Heart right ventricle (tissue), 16 donors: ENCODE measurements at regions of chr6 and their contacts with region 1.

Region 1: DNA sequence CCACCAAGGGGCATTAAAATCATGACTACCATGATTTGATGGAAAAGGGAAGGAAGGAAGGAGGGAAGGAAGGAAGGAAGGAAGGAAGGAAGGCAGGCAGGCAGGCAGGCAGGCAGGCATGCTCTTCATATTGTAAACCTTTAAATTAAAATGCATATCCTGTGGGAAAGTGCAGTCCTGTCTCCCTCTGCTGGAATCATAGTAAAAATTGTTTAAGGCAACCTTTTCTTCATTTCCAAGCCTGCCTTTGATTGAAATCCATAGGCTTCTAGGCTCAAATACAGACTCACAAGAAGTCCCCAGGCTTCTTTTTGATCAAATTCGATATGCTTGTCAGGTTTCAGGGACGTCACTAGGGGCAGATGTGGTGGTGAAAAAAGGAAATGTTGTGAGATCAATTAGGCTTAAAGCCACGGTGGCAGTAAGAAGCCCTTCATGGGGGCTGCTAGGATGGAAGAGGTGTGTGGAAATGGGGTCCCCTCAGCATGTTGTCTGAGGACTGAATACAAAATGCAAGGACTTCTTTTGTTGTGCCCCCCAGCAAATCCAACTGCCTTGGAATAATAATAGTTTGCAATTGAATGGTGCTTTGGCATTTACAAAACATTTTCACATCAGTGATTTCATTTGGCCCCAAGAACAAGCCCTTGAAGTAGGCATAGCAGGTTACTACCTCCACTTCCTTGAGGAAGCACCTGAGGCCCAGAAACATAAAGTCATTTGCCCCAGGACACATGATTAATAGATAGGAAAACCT is 25.6 kb upstream of the GABRR1 start:
- DNase-seq: peak in 1 of 2 donors; percentile 11
- ATAC-seq: peak in 1 of 8 donors; percentile 35
- H3K4me3 ChIP-seq: no peak overlapping the region
- H3K27ac ChIP-seq: no peak overlapping the region
- H3K4me1 ChIP-seq: peaks cover 0 to 8% (median 0%) of the 10 kb centered on the region in 9 donors
- H3K27me3 ChIP-seq: peaks cover 0 to 3% (median 0%) of the 10 kb centered on the region in 7 donors
- CTCF ChIP-seq: peak; percentile 30 to 67 (median 51)

Region 2: DNA sequence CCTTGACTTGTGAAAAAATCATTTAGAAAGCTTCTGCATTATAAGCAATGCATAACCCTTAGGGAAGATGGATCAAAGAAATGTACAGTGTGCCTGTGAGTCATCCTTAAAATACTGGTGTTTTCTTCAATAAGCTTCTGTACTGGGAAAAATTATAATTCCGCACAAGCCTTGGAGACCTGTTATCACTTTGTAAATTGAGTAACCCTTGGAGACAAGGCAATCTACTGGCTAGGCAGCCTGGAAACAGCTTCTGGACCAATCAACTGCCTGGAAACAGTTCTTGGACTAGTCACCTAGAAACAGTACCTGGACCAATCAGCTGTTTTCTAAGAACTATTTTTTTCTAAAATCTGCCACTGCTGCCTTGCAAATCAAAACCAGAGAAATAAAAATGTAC is 253.5 kb before region 1 on chr6:
- intact Hi-C with region 1: loop called in 3 of 10 experiments (anchors 5 kb)
- DNase-seq: no peak
- ATAC-seq: no peak
- H3K4me3 ChIP-seq: no peak overlapping the region
- H3K27ac ChIP-seq: no peak overlapping the region
- H3K4me1 ChIP-seq: peaks cover 0 to 10% (median 0%) of the 10 kb centered on the region in 9 donors
- H3K27me3 ChIP-seq: no peaks in the 10 kb centered on the region
- CTCF ChIP-seq: no peak

Region 3: DNA sequence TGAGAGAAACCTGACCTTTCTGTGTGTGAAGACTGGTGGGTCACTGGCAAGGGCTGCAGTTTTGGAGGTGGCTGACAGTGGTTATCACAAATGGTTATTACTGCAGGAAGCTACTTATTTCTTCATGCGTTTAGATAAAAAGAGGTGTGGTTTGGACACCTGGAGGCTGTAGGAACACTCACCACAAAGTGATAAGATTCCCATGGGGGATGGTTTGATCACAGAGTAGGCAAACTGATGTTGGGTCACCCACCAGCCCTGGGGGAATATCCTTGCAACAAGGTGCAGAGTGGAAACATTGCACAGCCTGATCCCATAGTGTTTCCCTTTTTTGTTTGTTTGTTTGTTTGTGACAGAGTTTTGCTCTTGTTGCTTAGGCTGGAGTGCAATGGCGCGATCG is 245.4 kb before region 1 on chr6:
- intact Hi-C with region 1: loop called in 1 of 10 experiments (anchors 5 kb)
- DNase-seq: no peak
- ATAC-seq: no peak
- H3K4me3 ChIP-seq: no peak overlapping the region
- H3K27ac ChIP-seq: no peak overlapping the region
- H3K4me1 ChIP-seq: peaks cover 0 to 14% (median 0%) of the 10 kb centered on the region in 9 donors
- H3K27me3 ChIP-seq: no peaks in the 10 kb centered on the region
- CTCF ChIP-seq: no peak

Region 4: GRCh38 chr6:89117211-89118108 is 125.3 kb before region 1 on chr6 and contains the start of gene SRSF12:
- intact Hi-C with region 1: loop called (anchors 1 to 10 kb)
- DNase-seq: peak; percentile 13 to 36
- ATAC-seq: peak; percentile 80 to 90 (median 86)
- H3K4me3 ChIP-seq: peak within 1 kb of the TSS; percentile 53 to 96 (median 73)
- H3K27ac ChIP-seq: peak within 1 kb of the TSS in 3 of 10 donors; percentile 1 to 70 (median 46)
- H3K4me1 ChIP-seq: peaks cover 0 to 14% (median 7%) of the 10 kb centered on the region in 9 donors
- H3K27me3 ChIP-seq: no peaks in the 10 kb centered on the region
- CTCF ChIP-seq: peak in 1 of 9 donors; percentile 21
- total RNA-seq, gene SRSF12: 0.06 to 0.47 (median 0.17) TPM in 8 of 10 donors, not detected in the others

Region 5: DNA sequence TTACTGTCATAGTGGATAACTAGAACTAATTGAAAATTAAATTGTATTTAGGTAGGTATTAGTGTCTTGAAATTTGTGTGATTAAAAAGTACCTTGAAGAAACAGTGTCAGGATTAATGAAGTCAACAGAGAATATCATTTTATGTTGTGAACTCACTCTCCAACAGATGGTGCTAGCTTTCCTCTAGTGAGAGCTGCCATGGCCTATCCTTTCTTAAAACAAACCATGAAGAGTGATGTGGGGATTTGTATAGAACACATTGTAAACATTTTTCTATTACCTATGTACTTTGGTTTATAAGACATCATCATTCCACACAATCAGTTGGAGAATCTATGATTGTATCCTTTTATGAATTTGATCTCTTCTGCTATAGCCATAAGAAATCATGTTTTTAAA is 120.1 kb before region 1 on chr6:
- intact Hi-C with region 1: loop called (anchors 1 to 10 kb)
- DNase-seq: no peak
- ATAC-seq: peak in 5 of 8 donors; percentile 55 to 72 (median 71)
- H3K4me3 ChIP-seq: no peak overlapping the region
- H3K27ac ChIP-seq: no peak overlapping the region
- H3K4me1 ChIP-seq: peaks cover 0 to 4% (median 0%) of the 10 kb centered on the region in 9 donors
- H3K27me3 ChIP-seq: no peaks in the 10 kb centered on the region
- CTCF ChIP-seq: peak; percentile 21 to 72 (median 55)

Region 6: GRCh38 chr6:89208551-89208950 is 34.2 kb before region 1 on chr6:
- intact Hi-C with region 1: no loop called
- DNase-seq: peak in 1 of 2 donors; percentile 10
- ATAC-seq: no peak
- H3K4me3 ChIP-seq: no peak overlapping the region
- H3K27ac ChIP-seq: no peak overlapping the region
- H3K4me1 ChIP-seq: no peaks in the 10 kb centered on the region
- H3K27me3 ChIP-seq: no peaks in the 10 kb centered on the region
- CTCF ChIP-seq: no peak